Heart left ventricle (tissue), 16 donors: ENCODE measurements at regions of chr19 and their contacts with region 1.

Region 1: DNA sequence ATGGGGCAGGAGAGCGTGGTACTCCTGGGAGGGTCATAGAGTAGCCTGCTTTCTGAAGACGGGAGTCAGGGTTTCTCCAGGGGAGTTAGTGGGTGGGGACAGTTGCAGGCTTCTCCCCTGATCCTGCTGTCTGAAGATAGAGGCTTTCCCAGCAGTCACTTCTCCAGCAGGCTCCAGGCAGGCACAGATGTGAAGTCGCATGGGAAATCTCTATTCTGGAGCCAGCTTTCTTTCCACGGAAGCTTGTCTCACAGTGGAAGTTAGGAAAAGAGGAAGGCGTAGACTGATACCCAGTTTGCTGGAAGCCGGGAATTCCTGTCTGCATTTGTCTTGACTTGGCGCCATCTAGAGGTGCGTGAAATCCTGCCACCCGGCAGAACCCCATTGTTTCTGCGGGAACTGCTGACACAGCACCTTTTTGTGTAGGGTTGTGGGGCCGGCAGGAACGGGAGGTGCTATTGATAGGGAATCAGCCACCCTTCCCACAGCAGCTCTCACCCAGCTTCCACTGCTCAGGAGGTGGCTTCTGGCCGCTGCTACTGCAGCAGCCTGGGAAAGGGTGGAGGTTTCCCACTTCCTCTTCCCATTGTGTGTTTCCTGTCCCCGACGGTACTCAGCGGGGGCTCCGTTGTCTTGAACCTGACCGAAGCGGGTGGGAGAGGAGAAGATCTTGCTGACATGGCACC is 28.5 kb upstream of the NPAS1 start:
- DNase-seq: peak; percentile 85 to 90 (median 88)
- ATAC-seq: peak; percentile 62 to 80 (median 67)
- H3K4me3 ChIP-seq: peak overlapping the region in 3 of 12 donors; percentile 5 to 29 (median 18)
- H3K27ac ChIP-seq: peak overlapping the region; percentile 53 to 88 (median 78)
- H3K4me1 ChIP-seq: peaks cover 8 to 85% (median 51%) of the 10 kb centered on the region in 12 donors
- H3K27me3 ChIP-seq: no peaks in the 10 kb centered on the region
- CTCF ChIP-seq: peak; percentile 70 to 97 (median 86)
- POLR2A ChIP-seq: no peak

Region 2: GRCh38 chr19:46753420-46754155 is 237.5 kb before region 1 on chr19:
- intact Hi-C with region 1: loop called in 6 of 10 experiments (anchors 5 to 10 kb)
- DNase-seq: no peak
- ATAC-seq: peak in 2 of 4 donors; percentile 13 to 19
- H3K4me3 ChIP-seq: no peak overlapping the region
- H3K27ac ChIP-seq: no peak overlapping the region
- H3K4me1 ChIP-seq: peaks cover 0 to 25% (median 4%) of the 10 kb centered on the region in 12 donors
- H3K27me3 ChIP-seq: no peaks in the 10 kb centered on the region
- CTCF ChIP-seq: peak; percentile 20 to 61 (median 45)
- POLR2A ChIP-seq: no peak

Region 3: DNA sequence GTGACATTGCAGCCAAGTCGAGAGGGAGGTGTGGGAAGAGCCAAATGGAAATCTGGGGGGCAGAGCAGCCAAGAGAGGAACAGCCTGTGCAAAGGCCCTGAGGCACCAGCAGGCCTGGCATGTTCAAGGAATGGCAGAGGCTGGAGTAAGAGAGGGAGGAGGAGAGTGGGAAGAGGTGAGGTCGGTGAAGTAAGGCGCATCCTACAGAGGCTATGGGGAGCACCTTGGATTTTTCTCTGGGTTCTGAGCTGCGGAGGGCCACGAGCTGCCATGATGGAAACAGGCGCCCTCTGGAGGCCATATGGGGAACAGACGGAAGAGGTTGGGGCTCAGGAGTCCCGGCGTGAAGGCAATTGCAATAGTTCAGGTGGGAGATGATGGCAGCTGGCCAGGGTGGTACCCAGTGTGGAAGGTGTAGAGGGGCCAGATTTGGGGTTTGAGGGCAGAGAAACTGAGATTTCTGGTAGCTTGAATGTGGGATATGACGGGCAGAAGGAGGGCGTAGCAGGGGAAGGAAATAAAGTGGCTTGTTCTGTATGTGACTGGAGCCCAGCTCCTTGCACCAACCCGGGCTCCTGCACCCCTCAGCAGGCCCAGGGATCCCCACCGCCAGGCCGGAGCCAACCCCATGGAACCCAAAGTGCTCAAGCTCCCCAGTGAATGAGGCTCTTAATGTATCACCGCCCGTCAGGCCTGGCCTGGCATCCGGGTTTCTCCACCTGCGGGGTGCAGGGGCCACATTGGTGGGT is 224.4 kb before region 1 on chr19:
- intact Hi-C with region 1: loop called in 2 of 10 experiments (anchors 10 kb)
- DNase-seq: peak in 2 of 5 donors; percentile 29 to 70
- ATAC-seq: peak in 2 of 4 donors; percentile 45 to 55
- H3K4me3 ChIP-seq: no peak overlapping the region
- H3K27ac ChIP-seq: no peak overlapping the region
- H3K4me1 ChIP-seq: peaks cover 0 to 20% (median 0%) of the 10 kb centered on the region in 12 donors
- H3K27me3 ChIP-seq: no peaks in the 10 kb centered on the region
- CTCF ChIP-seq: peak; percentile 40 to 68 (median 56)
- POLR2A ChIP-seq: no peak

Region 4: GRCh38 chr19:46860125-46860845 is 130.8 kb before region 1 on chr19:
- intact Hi-C with region 1: loop called in 8 of 10 experiments (anchors 1 to 2 kb)
- DNase-seq: peak; percentile 98 to 99 (median 99)
- ATAC-seq: peak; percentile 87 to 92 (median 90)
- H3K4me3 ChIP-seq: peak overlapping the region; percentile 63 to 97 (median 87)
- H3K27ac ChIP-seq: peak overlapping the region; percentile 96 to 100 (median 98)
- H3K4me1 ChIP-seq: peaks cover 8 to 67% (median 47%) of the 10 kb centered on the region in 12 donors
- H3K27me3 ChIP-seq: no peaks in the 10 kb centered on the region
- CTCF ChIP-seq: peak in 3 of 12 donors; percentile 10 to 18 (median 15)
- POLR2A ChIP-seq: peak in 1 of 2 donors; percentile 70

Region 5: GRCh38 chr19:46967578-46968027 is 23.5 kb before region 1 on chr19:
- intact Hi-C with region 1: loop called in 1 of 10 experiments (anchors 1 kb)
- DNase-seq: peak; percentile 71 to 90 (median 77)
- ATAC-seq: peak; percentile 85 to 93 (median 89)
- H3K4me3 ChIP-seq: peak overlapping the region in 1 of 12 donors; percentile 0
- H3K27ac ChIP-seq: peak overlapping the region; percentile 34 to 90 (median 74)
- H3K4me1 ChIP-seq: peaks cover 0 to 67% (median 45%) of the 10 kb centered on the region in 12 donors
- H3K27me3 ChIP-seq: no peaks in the 10 kb centered on the region
- CTCF ChIP-seq: no peak
- POLR2A ChIP-seq: no peak

Region 6: DNA sequence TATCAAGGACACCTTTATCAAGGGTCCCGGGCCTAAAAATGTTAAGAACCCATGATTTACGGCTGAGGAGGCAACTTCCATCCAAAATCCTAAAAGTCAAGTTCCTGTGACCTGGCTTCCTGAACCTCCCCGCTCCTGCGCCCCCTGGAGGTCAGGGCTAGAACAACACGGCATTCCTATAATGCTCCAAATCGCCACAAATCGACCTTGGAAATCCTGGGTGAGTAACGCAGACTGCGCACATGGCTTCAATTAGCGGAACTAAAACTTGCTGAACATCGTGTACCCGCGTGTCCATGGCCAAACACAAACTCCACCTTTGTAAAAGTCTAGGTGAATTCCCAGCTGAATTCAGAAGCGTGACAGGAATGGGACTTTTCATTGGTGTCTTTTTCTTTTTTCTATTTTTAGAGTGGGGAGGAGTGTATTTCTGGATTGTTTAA is 314.2 kb after region 1 on chr19:
- intact Hi-C with region 1: no loop called
- DNase-seq: peak; percentile 34 to 85 (median 64)
- ATAC-seq: peak in 2 of 4 donors; percentile 34 to 73
- H3K4me3 ChIP-seq: no peak overlapping the region
- H3K27ac ChIP-seq: no peak overlapping the region
- H3K4me1 ChIP-seq: peaks cover 0 to 8% (median 0%) of the 10 kb centered on the region in 12 donors
- H3K27me3 ChIP-seq: no peaks in the 10 kb centered on the region
- CTCF ChIP-seq: peak; percentile 87 to 95 (median 90)
- POLR2A ChIP-seq: no peak